ENCODE measurements at regions of chr16 and their contacts with region 1.

Region 1: GRCh38 chr16:85659805-85660495 is 28.8 kb downstream of the GINS2 start:
- DNase-seq: peak in 41 of 42 donors; percentile 52 to 92 (median 78)

Region 2: DNA sequence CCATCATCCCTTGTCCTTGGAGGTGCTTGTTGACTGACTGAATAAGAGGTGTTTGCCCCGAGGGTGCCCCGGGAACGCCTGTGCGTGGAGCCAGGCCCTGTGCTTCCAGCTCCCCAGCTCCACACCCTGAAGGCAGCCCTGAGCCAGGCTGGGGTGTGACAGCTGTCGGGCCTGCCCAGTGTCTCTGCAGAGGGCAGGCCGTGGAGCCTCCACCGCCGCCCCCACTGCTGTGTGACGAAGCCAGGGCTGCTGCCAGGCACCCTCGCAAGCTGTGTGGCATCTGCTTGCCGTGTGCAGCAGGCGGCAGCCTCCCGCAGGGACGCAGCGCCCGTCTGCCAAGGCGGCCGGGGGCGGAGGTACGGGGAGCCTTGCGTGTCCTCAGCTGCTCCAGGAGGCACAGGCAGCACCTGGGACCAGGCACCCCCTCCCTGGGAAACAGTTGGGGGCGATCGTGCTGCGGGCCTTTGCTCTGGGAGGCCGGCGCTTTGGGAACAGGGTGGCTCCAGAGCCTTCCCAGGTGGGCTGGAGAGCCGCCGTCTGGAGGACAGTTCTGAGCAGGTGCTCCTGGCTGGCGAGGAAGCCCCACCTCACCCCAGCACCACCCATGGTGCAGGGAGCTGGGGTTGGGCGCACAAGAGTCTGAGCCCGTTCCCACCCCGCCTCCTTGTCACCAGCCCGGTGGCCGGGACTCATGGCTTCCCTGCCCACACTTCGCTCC is 20.3 kb before region 1 on chr16:
- intact Hi-C with region 1: no loop called
- DNase-seq: peak in 40 of 42 donors; percentile 40 to 89 (median 72)

Region 3: GRCh38 chr16:85717393-85718121 is 57.6 kb after region 1 on chr16:
- intact Hi-C with region 1: loop called (anchors 10 kb)
- DNase-seq: peak; percentile 48 to 90 (median 74)

Region 4: DNA sequence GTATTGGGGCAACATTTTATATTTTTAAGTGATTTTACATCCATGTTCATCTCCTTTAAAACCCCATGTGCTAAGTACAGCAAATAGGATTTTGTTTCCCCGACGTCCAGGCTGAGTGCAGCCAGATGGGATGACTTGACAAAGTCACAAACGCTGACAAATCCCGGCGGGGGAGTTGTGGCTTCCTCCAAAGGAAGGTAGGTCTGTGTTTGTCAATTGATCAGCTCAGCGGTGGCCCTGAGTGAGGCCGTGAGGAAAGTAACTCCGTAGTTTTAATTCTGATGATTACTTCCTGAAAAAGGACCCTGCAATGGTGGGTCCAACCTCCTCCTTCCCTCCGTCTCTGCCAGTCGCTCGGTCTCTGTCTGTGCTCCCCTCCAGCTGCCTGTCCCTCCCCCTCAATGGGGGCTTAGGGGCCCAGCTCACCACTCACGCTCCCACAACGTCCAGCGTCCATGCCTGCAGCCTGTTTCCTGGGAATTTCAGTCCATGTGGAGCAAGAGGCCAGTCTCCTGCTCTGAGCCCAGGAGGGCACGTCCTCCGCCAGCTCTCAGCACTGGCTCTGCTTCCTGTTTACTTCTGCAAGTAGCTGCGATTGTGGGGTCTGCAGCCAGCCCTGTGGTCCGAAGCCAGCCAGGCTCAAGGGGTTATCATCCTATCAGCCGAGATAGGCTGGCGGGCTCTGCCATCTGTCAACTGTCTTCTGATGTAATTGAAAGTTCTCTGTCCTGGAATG is 641.0 kb after region 1 on chr16:
- intact Hi-C with region 1: no loop called
- DNase-seq: no peak

Measured in head of caudate nucleus (tissue), 42 donors.